ENCODE measurements at regions of chr2 and their contacts with region 1.

Region 1: DNA sequence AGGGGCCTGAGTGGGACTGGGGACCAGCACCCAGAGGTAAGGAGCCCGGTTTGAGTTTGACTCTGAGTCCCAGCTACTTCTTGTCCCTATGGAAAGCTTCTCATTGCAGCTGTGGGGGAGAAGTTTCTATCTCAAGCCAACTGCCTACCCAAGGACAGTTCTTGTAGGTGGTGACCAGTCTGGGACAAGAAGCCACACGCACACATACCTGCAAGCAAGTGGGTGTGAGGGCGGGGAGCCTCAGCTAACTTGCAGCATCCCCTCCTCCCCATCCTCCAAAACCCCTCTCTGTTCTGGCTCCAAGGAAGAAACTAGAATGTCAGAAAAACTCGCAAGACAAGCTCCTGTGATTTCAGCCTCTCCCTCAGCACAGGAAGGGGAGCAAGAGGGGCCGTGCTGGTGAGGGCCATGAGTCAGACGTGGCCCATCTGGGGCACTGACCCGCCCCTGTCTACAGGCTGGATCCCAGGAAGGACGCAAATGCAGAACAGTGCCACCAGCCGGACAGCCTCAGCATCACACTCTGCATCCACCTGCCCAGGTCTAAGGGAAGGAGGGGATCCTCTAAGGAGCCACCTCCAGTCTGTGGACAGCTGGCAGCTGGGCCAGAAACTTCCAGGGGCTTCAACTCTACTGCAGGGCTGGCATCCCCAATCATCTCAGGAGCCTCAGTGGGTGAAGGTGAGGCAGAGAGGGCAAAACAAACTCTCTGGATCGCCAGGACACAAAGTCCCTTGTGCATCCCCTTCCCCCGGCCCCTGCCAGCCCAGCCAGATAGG is 103.4 kb downstream of the TNS1 start:
- DNase-seq: peak in 3 of 5 donors; percentile 64 to 89 (median 80)
- ATAC-seq: peak; percentile 3 to 45 (median 24)
- H3K4me3 ChIP-seq: peak overlapping the region in 1 of 12 donors; percentile 27
- H3K27ac ChIP-seq: peak overlapping the region; percentile 85 to 99 (median 94)
- H3K4me1 ChIP-seq: peaks cover 21 to 78% (median 73%) of the 10 kb centered on the region in 12 donors
- H3K27me3 ChIP-seq: no peaks in the 10 kb centered on the region
- CTCF ChIP-seq: peak; percentile 41 to 69 (median 58)
- POLR2A ChIP-seq: no peak

Region 2: GRCh38 chr2:217836901-217837491 is 62.4 kb before region 1 on chr2:
- intact Hi-C with region 1: no loop called
- DNase-seq: peak; percentile 83 to 93 (median 85)
- ATAC-seq: peak; percentile 59 to 64 (median 62)
- H3K4me3 ChIP-seq: no peak overlapping the region
- H3K27ac ChIP-seq: peak overlapping the region; percentile 74 to 96 (median 88)
- H3K4me1 ChIP-seq: peaks cover 22 to 100% (median 97%) of the 10 kb centered on the region in 12 donors
- H3K27me3 ChIP-seq: no peaks in the 10 kb centered on the region
- CTCF ChIP-seq: peak in 11 of 12 donors; percentile 7 to 55 (median 38)
- POLR2A ChIP-seq: no peak

Region 3: DNA sequence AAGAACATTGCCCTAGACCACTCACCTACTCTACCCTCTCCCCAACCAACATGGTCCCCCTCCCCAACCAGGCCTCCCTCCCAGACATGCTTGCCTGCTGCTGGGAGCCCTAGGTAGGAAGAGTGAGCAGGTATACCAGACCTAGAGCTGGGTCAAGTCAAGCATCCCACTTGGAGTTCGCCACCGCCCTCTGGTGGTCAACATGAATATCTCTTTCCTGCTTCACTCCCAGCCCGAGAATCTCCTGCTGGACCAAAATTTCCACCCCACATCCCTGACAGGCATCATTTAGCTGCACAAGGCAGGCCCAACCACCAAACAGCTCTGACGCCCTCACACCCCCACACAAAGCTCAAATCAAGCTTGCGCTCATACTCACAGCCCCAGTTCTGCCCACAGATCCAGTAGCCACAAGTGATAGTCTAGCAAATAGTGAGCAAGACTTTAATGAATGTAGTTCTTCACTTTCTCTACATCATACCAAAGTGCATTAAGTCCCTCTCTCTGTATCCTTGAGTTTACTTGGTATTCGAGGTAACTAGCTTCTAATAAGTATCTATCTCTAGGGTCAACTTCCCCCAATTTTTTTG is 12.6 kb before region 1 on chr2:
- intact Hi-C with region 1: loop called in 2 of 10 experiments (anchors 2 kb)
- DNase-seq: peak; percentile 74 to 82 (median 79)
- ATAC-seq: peak in 3 of 4 donors; percentile 9 to 41 (median 33)
- H3K4me3 ChIP-seq: no peak overlapping the region
- H3K27ac ChIP-seq: peak overlapping the region in 9 of 12 donors; percentile 19 to 79 (median 65)
- H3K4me1 ChIP-seq: peaks cover 8 to 72% (median 52%) of the 10 kb centered on the region in 12 donors
- H3K27me3 ChIP-seq: no peaks in the 10 kb centered on the region
- CTCF ChIP-seq: peak; percentile 70 to 90 (median 79)
- POLR2A ChIP-seq: no peak

Region 4: DNA sequence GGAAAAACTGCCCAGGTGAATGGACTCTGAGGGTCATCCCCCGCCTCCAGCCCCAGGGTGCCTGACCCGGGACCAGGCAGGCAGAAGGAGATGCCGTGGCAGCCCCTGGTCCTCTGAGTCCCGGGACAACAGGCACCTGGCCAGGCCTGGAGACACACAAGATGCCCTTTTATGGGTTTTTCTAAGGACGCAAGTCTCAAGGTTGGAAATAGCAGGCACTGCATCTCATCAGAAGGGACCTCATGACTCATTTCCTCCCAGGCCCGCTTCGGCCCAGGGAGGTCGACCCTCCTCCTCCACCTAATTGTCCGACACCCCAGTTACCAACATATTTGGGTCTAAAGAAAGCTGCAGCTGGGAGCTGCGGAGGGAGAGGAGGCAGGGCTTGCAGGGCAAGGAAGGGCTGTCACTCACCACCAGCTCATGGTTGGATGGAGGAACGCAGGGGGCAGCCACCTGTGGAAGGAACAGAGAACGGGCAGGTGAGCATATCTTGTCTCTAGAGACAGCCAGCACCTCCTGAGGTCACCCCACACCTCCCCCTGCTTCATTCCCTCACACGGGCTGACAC is 20.4 kb after region 1 on chr2:
- intact Hi-C with region 1: loop called in 1 of 10 experiments (anchors 2 kb)
- DNase-seq: peak; percentile 44 to 86 (median 61)
- ATAC-seq: peak in 3 of 4 donors; percentile 1 to 22 (median 3)
- H3K4me3 ChIP-seq: peak overlapping the region in 2 of 12 donors; percentile 1 to 8
- H3K27ac ChIP-seq: peak overlapping the region; percentile 74 to 99 (median 94)
- H3K4me1 ChIP-seq: peaks cover 60 to 100% (median 99%) of the 10 kb centered on the region in 12 donors
- H3K27me3 ChIP-seq: no peaks in the 10 kb centered on the region
- CTCF ChIP-seq: no peak
- POLR2A ChIP-seq: no peak

Region 5: GRCh38 chr2:217934321-217935131 is 35.1 kb after region 1 on chr2:
- intact Hi-C with region 1: loop called in 6 of 10 experiments (anchors 2 to 5 kb)
- DNase-seq: peak in 4 of 5 donors; percentile 67 to 90 (median 74)
- ATAC-seq: peak; percentile 8 to 62 (median 40)
- H3K4me3 ChIP-seq: peak overlapping the region in 10 of 12 donors; percentile 2 to 95 (median 28)
- H3K27ac ChIP-seq: peak overlapping the region; percentile 92 to 99 (median 96)
- H3K4me1 ChIP-seq: peaks cover 37 to 100% (median 99%) of the 10 kb centered on the region in 12 donors
- H3K27me3 ChIP-seq: no peaks in the 10 kb centered on the region
- CTCF ChIP-seq: no peak
- POLR2A ChIP-seq: no peak

Region 6: DNA sequence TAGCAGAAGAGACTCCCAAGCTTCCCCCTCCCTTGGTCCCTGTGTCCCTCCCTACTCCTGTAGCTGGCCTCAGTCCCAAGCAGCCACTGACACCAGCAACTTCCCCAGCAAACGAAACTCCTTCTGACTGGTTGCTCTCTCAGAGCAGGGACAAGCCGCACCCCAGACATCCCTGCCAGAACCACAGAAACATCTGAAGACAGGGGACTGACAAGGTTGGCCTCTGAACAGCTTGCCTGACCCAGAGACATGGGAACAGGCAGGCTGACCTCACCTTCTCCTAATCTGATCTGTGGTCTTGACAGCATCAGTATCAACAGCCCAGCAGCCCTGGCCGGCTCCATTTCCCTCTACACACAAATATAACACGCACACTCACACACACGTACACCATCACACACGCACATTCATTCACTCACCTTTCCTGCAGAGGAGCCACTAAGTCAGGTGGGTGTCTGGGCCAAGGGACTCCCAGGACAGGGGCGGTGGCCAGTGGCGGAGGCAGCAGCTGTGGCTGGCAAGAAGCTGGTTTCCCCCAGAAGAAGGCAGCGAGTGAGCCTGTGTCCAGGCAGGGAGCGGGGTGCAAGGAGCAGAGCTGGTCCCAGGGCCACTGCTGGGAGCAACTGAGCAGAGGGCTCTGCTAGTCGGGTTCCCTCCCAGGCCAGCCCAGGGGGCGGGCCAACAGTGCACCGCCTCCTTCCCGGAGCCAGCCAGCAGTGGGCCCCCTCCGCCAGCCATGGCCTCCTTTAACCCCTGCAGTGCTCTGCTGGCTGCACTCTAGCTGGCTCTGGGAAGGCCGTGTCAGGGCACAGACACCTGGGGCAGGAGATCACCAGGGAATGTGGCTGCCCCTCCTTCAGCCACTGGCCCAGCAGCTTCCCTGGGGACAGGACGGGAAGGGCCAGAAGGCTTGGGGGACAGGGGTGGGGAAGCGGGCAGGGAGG is 44.3 kb after region 1 on chr2:
- intact Hi-C with region 1: loop called in 8 of 10 experiments (anchors 2 to 5 kb)
- DNase-seq: peak; percentile 91 to 94 (median 92)
- ATAC-seq: peak; percentile 87 to 90 (median 90)
- H3K4me3 ChIP-seq: peak overlapping the region; percentile 56 to 95 (median 82)
- H3K27ac ChIP-seq: peak overlapping the region; percentile 92 to 99 (median 96)
- H3K4me1 ChIP-seq: peaks cover 8 to 82% (median 65%) of the 10 kb centered on the region in 12 donors
- H3K27me3 ChIP-seq: no peaks in the 10 kb centered on the region
- CTCF ChIP-seq: peak; percentile 24 to 67 (median 52)
- POLR2A ChIP-seq: peak; percentile 64 to 96

Measured in heart left ventricle (tissue), 16 donors.